ENCODE measurements at regions of chr5 and their contacts with region 1.

Region 1: GRCh38 chr5:34522599-34523386 is 133.3 kb upstream of the RAI14 start:
- DNase-seq: peak; percentile 29
- H3K4me3 Mint-ChIP-seq: no peak overlapping the region
- H3K27ac Mint-ChIP-seq: no peak overlapping the region
- H3K4me1 Mint-ChIP-seq: peaks cover 8% of the 10 kb centered on the region
- H3K27me3 Mint-ChIP-seq: peaks cover under 1% of the 10 kb centered on the region

Region 2: DNA sequence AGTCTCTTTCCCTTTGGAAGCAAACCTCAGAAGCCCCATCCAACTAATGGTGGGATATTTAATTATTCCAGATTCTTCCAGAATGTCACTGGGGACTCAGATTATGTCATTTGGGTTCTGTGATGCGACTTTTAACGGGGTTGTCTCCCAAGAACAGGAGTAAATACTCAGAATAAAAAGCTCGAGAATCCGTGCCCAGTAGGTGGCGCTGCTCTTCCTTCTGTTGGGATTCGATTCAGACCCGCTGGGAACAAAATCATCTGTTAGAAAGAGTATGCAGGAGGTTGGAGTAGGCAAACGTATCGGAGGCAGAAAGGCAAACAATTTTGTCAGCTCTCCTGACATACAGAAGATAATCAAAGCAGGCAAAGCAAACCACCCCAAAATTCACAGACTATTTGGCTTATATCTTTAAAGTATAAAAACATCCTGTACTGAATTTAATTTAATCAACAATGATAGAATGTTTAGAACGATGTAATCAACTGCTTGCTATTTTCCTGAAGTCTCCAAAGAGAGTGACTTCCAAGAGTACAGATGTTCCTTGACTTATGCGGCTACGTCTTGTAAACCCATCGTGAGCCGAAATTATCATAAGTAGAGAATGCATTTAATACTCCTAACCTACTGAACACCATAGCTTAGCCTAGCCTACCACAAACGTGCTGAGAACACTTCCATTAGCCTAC is 36.5 kb before region 1 on chr5:
- intact Hi-C with region 1: loop called (anchors 5 kb)
- DNase-seq: peak; percentile 26
- H3K4me3 Mint-ChIP-seq: no peak overlapping the region
- H3K27ac Mint-ChIP-seq: no peak overlapping the region
- H3K4me1 Mint-ChIP-seq: no peaks in the 10 kb centered on the region
- H3K27me3 Mint-ChIP-seq: peaks cover 18% of the 10 kb centered on the region

Region 3: DNA sequence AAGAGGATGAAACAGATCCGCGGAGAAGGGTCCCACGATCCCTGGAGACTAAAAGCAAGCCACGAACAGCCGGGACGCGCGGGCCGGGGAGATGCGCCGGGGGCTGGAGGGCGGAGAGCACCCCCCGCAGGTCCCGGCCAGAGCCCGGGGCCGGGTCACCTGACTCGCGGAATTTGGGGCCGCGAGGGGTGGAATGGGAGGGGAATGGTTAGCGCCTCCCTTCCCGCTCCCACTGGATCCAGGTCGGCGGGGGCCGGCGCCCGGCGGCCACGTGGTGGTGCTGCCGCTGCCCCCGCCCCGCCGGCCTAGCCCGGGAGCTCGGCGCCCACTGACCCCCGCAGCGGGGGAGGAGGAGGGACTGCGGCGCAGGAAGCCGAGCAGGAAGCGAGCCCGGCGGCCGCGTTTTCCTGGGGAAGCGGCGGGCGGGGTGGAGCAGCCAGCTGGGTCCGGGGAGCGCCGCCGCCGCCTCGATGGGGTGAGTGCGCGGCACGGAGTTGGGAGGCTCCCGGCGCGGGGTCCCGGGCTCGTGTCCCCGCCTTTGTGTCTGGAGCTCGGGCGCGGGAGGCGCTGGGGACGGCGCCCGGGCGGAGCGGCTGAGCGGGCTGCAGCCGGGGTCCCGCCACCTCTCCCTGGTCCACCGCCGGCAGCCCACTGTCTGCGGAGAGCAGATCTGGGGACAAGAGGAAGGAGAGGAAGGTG is 133.4 kb after region 1 on chr5 and contains the start of gene RAI14:
- intact Hi-C with region 1: loop called (anchors 10 kb)
- DNase-seq: peak; percentile 1
- H3K4me3 Mint-ChIP-seq: peak within 1 kb of the TSS; percentile 86
- H3K27ac Mint-ChIP-seq: peak within 1 kb of the TSS; percentile 29
- H3K4me1 Mint-ChIP-seq: peaks cover 18% of the 10 kb centered on the region
- H3K27me3 Mint-ChIP-seq: peaks cover 60% of the 10 kb centered on the region
- total RNA-seq, gene RAI14: 1.2 and 1.5 TPM in 2 replicates

Region 4: GRCh38 chr5:34838785-34839714 is 316.3 kb after region 1 on chr5 and contains the start of gene TTC23L:
- intact Hi-C with region 1: loop called (anchors 10 kb)
- DNase-seq: peak; percentile 88
- H3K4me3 Mint-ChIP-seq: peak within 1 kb of the TSS; percentile 93
- H3K27ac Mint-ChIP-seq: peak within 1 kb of the TSS; percentile 81
- H3K4me1 Mint-ChIP-seq: peaks cover 15% of the 10 kb centered on the region
- H3K27me3 Mint-ChIP-seq: peaks cover 11% of the 10 kb centered on the region
- total RNA-seq, gene TTC23L: not detected in 2 replicates

Region 5: GRCh38 chr5:34898258-34898895 is 375.6 kb after region 1 on chr5:
- intact Hi-C with region 1: loop called (anchors 1 kb)
- DNase-seq: peak; percentile 27
- H3K4me3 Mint-ChIP-seq: no peak overlapping the region
- H3K27ac Mint-ChIP-seq: no peak overlapping the region
- H3K4me1 Mint-ChIP-seq: no peaks in the 10 kb centered on the region
- H3K27me3 Mint-ChIP-seq: no peaks in the 10 kb centered on the region

Region 6: DNA sequence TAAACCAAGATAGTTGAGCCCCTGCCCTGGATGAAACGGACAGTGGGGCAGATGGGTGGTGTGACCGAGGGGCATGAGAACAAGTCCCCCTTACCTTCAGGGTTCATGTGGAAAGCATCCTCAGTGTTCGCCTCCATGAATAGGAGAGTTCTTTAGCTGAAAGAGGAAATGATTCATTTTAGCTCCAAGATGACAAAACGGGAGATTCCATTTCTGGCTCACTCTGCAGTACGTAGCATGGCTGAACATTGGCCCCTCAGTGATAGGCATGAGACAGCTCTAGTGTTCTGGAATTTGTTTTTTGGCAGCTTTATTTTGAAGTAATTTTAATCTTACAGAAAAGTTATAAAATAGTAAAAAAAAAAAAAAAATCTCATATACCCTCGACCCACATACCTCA is 595.2 kb after region 1 on chr5:
- intact Hi-C with region 1: no loop called
- DNase-seq: no peak
- H3K4me3 Mint-ChIP-seq: no peak overlapping the region
- H3K27ac Mint-ChIP-seq: no peak overlapping the region
- H3K4me1 Mint-ChIP-seq: no peaks in the 10 kb centered on the region
- H3K27me3 Mint-ChIP-seq: peaks cover 6% of the 10 kb centered on the region